Naive thymus-derived CD4-positive, alpha-beta T cell (primary cell): ENCODE measurements at regions of chr18 and their contacts with region 1.

Region 1: DNA sequence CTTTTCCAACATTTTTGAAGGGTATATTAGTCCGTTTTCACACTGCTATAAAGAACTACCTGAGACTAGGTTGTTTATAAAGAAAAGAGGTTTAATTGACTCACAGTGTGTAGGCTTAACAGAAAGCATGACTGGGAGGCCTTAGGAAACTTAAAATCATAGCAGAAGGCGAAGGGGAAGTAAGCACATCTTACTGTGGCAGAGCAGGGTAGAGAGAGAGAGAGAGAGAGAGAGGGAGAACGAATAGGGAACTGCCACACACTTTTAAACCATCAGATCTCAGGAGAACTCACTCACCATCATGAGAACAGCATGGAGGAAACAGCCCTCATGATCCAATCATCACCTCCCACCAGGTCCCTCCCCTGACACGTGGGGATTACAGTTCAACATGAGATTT is 420.3 kb downstream of the SOCS6 start:
- DNase-seq: no peak
- ATAC-seq: no peak
- H3K4me3 ChIP-seq: no peak overlapping the region
- H3K4me3 Mint-ChIP-seq: peak overlapping the region in 1 of 10 donors; percentile 3
- H3K27ac ChIP-seq: no peak overlapping the region
- H3K27ac Mint-ChIP-seq: peak overlapping the region in 7 of 9 donors; percentile 2 to 69 (median 66)
- H3K4me1 ChIP-seq: peaks cover 0 to 4% of the 10 kb centered on the region in 2 donors
- H3K4me1 Mint-ChIP-seq: peaks cover 0 to 33% (median 23%) of the 10 kb centered on the region in 7 donors
- H3K27me3 ChIP-seq: no peaks in the 10 kb centered on the region
- H3K27me3 Mint-ChIP-seq: no peaks in the 10 kb centered on the region

Region 2: GRCh38 chr18:69484699-69485396 is 1224.3 kb before region 1 on chr18:
- CTCF ChIA-PET with region 1: no interaction called
- POLR2A ChIA-PET with region 1: no interaction called
- intact Hi-C with region 1: no loop called
- DNase-seq: no peak
- ATAC-seq: no peak
- H3K4me3 ChIP-seq: no peak overlapping the region
- H3K4me3 Mint-ChIP-seq: no peak overlapping the region
- H3K27ac ChIP-seq: no peak overlapping the region
- H3K27ac Mint-ChIP-seq: no peak overlapping the region
- H3K4me1 ChIP-seq: no peaks in the 10 kb centered on the region
- H3K4me1 Mint-ChIP-seq: no peaks in the 10 kb centered on the region
- H3K27me3 ChIP-seq: no peaks in the 10 kb centered on the region
- H3K27me3 Mint-ChIP-seq: peaks cover 3 to 19% (median 16%) of the 10 kb centered on the region in 5 donors

Region 3: DNA sequence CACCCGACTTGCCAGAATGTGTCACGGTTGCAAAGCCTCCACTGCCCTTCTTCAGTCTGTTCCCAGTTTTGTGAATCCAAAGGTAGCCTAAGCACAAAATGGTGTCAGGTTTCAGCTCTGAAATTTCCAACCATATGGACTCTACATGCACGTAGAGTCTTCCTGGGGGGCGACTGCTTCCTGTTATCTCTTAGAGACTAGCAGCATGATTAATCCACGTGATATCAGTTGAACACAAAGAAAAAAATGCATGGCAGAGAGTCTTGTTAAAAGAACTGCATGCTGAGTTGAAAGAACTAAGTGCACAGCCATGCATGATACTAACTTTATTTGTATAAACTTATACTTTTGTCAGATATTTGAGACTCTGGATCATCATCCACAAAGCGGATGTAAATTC is 15.9 kb before region 1 on chr18:
- CTCF ChIA-PET with region 1: no interaction called
- POLR2A ChIA-PET with region 1: interaction called, 4 read pairs
- intact Hi-C with region 1: loop called in 1 of 2 experiments (anchors 2 kb)
- DNase-seq: no peak
- ATAC-seq: no peak
- H3K4me3 ChIP-seq: no peak overlapping the region
- H3K4me3 Mint-ChIP-seq: no peak overlapping the region
- H3K27ac ChIP-seq: no peak overlapping the region
- H3K27ac Mint-ChIP-seq: no peak overlapping the region
- H3K4me1 ChIP-seq: no peaks in the 10 kb centered on the region
- H3K4me1 Mint-ChIP-seq: peaks cover 0 to 32% (median 24%) of the 10 kb centered on the region in 7 donors
- H3K27me3 ChIP-seq: no peaks in the 10 kb centered on the region
- H3K27me3 Mint-ChIP-seq: no peaks in the 10 kb centered on the region

Region 4: DNA sequence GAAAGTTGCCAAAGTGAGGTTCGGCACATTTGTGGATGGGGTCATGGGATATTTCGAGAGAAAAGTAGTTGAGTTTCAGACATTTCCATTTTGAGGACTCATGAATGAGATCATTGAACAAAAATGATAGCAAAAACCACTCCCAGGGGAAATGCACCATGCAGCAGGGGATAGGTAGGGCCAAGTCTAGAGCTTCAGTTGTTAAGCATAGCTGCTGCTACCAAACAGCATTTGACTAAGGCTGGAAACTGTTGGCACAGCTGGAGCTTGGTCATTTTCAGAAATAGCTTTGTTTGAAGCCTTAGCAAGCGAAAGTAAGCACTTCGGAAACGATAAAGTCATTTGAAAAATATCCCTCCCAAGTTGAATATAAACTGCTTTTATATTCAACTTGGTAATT is 11.5 kb after region 1 on chr18:
- CTCF ChIA-PET with region 1: no interaction called
- POLR2A ChIA-PET with region 1: interaction called, 3 read pairs
- intact Hi-C with region 1: loop called in 1 of 2 experiments (anchors 2 kb)
- DNase-seq: no peak
- ATAC-seq: no peak
- H3K4me3 ChIP-seq: no peak overlapping the region
- H3K4me3 Mint-ChIP-seq: no peak overlapping the region
- H3K27ac ChIP-seq: no peak overlapping the region
- H3K27ac Mint-ChIP-seq: no peak overlapping the region
- H3K4me1 ChIP-seq: no peaks in the 10 kb centered on the region
- H3K4me1 Mint-ChIP-seq: peaks cover 0 to 8% (median 0%) of the 10 kb centered on the region in 7 donors
- H3K27me3 ChIP-seq: no peaks in the 10 kb centered on the region
- H3K27me3 Mint-ChIP-seq: no peaks in the 10 kb centered on the region

Region 5: DNA sequence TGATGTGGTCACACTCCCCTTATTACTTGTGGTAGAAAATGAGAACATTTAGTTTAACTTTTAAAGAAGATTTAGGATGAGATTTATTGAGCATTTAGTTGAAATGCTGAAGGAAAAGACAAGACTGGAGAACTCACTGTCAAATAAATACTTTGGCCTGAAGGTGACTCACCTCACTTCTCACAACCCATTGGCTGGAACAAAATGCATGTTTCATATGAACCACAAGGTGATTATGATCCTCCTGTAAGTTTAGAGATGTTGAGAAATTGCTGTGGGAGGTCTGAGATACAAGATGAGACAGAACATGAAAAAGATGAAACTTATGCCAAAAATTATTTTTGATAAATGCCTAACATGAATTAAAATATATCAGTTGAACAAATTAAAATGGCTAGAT is 584.2 kb after region 1 on chr18:
- CTCF ChIA-PET with region 1: no interaction called
- POLR2A ChIA-PET with region 1: no interaction called
- intact Hi-C with region 1: no loop called
- DNase-seq: no peak
- ATAC-seq: no peak
- H3K4me3 ChIP-seq: no peak overlapping the region
- H3K4me3 Mint-ChIP-seq: no peak overlapping the region
- H3K27ac ChIP-seq: no peak overlapping the region
- H3K27ac Mint-ChIP-seq: no peak overlapping the region
- H3K4me1 ChIP-seq: no peaks in the 10 kb centered on the region
- H3K4me1 Mint-ChIP-seq: no peaks in the 10 kb centered on the region
- H3K27me3 ChIP-seq: no peaks in the 10 kb centered on the region
- H3K27me3 Mint-ChIP-seq: peaks cover 0 to 5% (median 0%) of the 10 kb centered on the region in 5 donors